Caco-2 (cell line): ENCODE measurements at regions of chr5 and their contacts with region 1.

Region 1: GRCh38 chr5:36414869-36415282 is 113.2 kb upstream of the RANBP3L start:
- DNase-seq: peak in 1 of 2 experiments; percentile 51
- H3K4me3 ChIP-seq: no peak overlapping the region
- H3K4me3 Mint-ChIP-seq: no peak overlapping the region
- H3K27ac Mint-ChIP-seq: no peak overlapping the region
- H3K4me1 ChIP-seq: peaks cover 48% of the 10 kb centered on the region
- H3K4me1 Mint-ChIP-seq: peaks cover 25% of the 10 kb centered on the region
- H3K27me3 ChIP-seq: no peaks in the 10 kb centered on the region
- H3K27me3 Mint-ChIP-seq: no peaks in the 10 kb centered on the region
- CTCF ChIP-seq: peak; percentile 54 to 64

Region 2: GRCh38 chr5:36150676-36151433 is 264.0 kb before region 1 on chr5:
- CTCF ChIA-PET with region 1: no interaction called
- POLR2A ChIA-PET with region 1: no interaction called
- intact Hi-C with region 1: no loop called
- DNase-seq: peak; percentile 64 to 68
- H3K4me3 ChIP-seq: peak overlapping the region; percentile 98
- H3K4me3 Mint-ChIP-seq: peak overlapping the region; percentile 75
- H3K27ac Mint-ChIP-seq: peak overlapping the region; percentile 85
- H3K4me1 ChIP-seq: peaks cover 53% of the 10 kb centered on the region
- H3K4me1 Mint-ChIP-seq: peaks cover 46% of the 10 kb centered on the region
- H3K27me3 ChIP-seq: no peaks in the 10 kb centered on the region
- H3K27me3 Mint-ChIP-seq: no peaks in the 10 kb centered on the region
- CTCF ChIP-seq: no peak

Region 3: GRCh38 chr5:36442796-36443195 is 27.9 kb after region 1 on chr5:
- CTCF ChIA-PET with region 1: interaction called, 3 read pairs
- POLR2A ChIA-PET with region 1: no interaction called
- intact Hi-C with region 1: loop called (anchors 1 kb)
- DNase-seq: no peak
- H3K4me3 ChIP-seq: no peak overlapping the region
- H3K4me3 Mint-ChIP-seq: peak overlapping the region; percentile 10
- H3K27ac Mint-ChIP-seq: peak overlapping the region; percentile 75
- H3K4me1 ChIP-seq: peaks cover 54% of the 10 kb centered on the region
- H3K4me1 Mint-ChIP-seq: peaks cover 36% of the 10 kb centered on the region
- H3K27me3 ChIP-seq: no peaks in the 10 kb centered on the region
- H3K27me3 Mint-ChIP-seq: no peaks in the 10 kb centered on the region
- CTCF ChIP-seq: no peak

Region 4: GRCh38 chr5:36492998-36493655 is 78.3 kb after region 1 on chr5:
- CTCF ChIA-PET with region 1: interaction called, 12 read pairs
- POLR2A ChIA-PET with region 1: no interaction called
- intact Hi-C with region 1: loop called (anchors 1 kb)
- DNase-seq: peak in 1 of 2 experiments; percentile 14
- H3K4me3 ChIP-seq: no peak overlapping the region
- H3K4me3 Mint-ChIP-seq: no peak overlapping the region
- H3K27ac Mint-ChIP-seq: no peak overlapping the region
- H3K4me1 ChIP-seq: peaks cover 9% of the 10 kb centered on the region; the same call in 1 of the 2 replicates
- H3K4me1 Mint-ChIP-seq: peaks cover 10% of the 10 kb centered on the region
- H3K27me3 ChIP-seq: no peaks in the 10 kb centered on the region
- H3K27me3 Mint-ChIP-seq: no peaks in the 10 kb centered on the region
- CTCF ChIP-seq: peak in 1 of 2 experiments; percentile 16

Region 5: GRCh38 chr5:36606428-36607113 is 191.7 kb after region 1 on chr5 and contains the start of gene SLC1A3:
- CTCF ChIA-PET with region 1: interaction called, 3 read pairs
- POLR2A ChIA-PET with region 1: interaction called, 3 read pairs
- intact Hi-C with region 1: loop called (anchors 2 kb)
- DNase-seq: peak; percentile 83 to 87
- H3K4me3 ChIP-seq: peak within 1 kb of the TSS; percentile 40
- H3K4me3 Mint-ChIP-seq: peak within 1 kb of the TSS; percentile 98
- H3K27ac Mint-ChIP-seq: peak within 1 kb of the TSS; percentile 91
- H3K4me1 ChIP-seq: peaks cover 55% of the 10 kb centered on the region
- H3K4me1 Mint-ChIP-seq: peaks cover 27% of the 10 kb centered on the region
- H3K27me3 ChIP-seq: no peaks in the 10 kb centered on the region
- H3K27me3 Mint-ChIP-seq: no peaks in the 10 kb centered on the region
- CTCF ChIP-seq: no peak
- total RNA-seq, gene SLC1A3: 178 and 195 TPM in 2 replicates

Region 6: DNA sequence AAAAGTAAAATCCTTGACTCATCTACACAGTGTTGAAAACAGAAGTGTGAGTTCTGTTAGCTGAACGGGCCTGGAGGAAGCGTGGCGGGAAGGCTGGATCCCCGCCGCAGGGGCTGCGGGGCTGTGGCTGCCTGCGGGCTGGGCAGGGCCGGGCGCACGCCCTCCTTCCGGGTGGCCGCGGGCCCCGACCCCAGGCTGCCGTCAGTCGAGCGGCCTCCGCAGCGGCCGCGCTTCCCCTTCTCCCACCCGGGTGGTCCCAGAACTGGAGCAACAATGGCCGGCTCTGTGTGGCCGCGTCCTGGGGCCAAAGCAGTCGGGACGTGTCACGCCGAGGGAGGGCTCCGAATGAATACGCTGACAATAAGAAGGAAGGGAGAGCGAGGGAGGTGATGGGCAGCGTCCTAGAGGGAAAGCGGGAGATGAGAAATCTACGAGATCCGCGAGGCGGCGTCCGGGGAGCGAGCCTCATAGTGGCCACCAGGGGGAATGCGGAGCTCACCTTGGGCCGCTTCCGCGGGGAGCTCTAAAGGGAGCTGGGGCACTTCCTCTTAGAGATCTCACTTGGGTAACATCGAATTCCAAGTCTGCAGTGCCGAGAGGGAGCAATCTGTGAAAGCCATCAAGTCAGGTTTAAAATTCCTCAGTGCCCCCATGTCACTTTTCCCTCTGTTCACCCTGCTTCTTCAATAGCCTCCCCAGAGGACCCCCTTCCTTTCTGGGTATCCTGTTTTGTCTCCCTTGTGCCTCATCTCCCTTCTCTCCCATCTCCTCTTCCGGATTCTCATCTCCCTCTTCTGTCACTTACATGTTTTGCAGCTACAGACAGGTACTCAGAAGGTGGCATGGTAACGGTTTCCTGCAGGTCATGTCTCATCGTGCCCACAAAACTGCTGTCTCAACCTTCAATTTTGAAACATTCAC is 275.4 kb after region 1 on chr5:
- CTCF ChIA-PET with region 1: interaction called, 44 read pairs
- POLR2A ChIA-PET with region 1: interaction called, 4 read pairs
- intact Hi-C with region 1: loop called (anchors 1 kb)
- DNase-seq: peak; percentile 90 to 91
- H3K4me3 ChIP-seq: peak overlapping the region; percentile 71
- H3K4me3 Mint-ChIP-seq: peak overlapping the region; percentile 75
- H3K27ac Mint-ChIP-seq: peak overlapping the region; percentile 28
- H3K4me1 ChIP-seq: peaks cover 14% of the 10 kb centered on the region; the same call in 1 of the 2 replicates
- H3K4me1 Mint-ChIP-seq: peaks cover 10% of the 10 kb centered on the region
- H3K27me3 ChIP-seq: no peaks in the 10 kb centered on the region
- H3K27me3 Mint-ChIP-seq: no peaks in the 10 kb centered on the region
- CTCF ChIP-seq: peak; percentile 80 to 91

Region 7: DNA sequence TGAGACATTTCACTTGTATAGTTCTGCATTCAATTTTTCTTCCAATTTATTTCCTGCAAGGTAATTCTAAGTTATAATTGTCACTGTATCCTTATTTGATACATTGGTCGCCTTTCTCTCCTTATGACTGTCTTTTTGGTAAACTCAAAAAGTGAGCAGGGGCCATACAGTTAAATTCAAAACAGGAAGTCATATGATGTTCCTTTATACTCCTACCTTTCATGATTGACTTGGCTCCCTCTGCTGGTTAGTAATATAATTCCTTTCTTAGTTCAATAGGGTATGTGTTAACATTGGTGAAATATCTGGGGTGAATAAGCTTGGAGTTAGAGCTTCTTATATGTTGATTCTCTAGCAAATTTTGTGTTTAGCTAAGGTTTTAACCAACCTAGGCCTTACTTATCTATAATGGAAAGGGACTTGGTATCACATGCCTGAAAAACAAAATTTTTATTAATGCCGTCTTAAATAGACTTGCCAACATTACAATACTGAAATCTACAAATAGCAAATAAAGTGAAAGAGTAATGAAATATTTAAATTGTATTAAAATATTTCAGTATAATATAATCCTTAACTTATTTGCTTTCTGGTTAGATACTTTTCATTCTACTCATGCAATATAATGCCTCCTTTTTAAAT is 455.6 kb after region 1 on chr5:
- CTCF ChIA-PET with region 1: interaction called, 6 read pairs
- POLR2A ChIA-PET with region 1: no interaction called
- intact Hi-C with region 1: loop called (anchors 5 kb)
- DNase-seq: peak in 1 of 2 experiments; percentile 61
- H3K4me3 ChIP-seq: no peak overlapping the region
- H3K4me3 Mint-ChIP-seq: no peak overlapping the region
- H3K27ac Mint-ChIP-seq: no peak overlapping the region
- H3K4me1 ChIP-seq: 0 out of 2 replicates have a peak, but pooled peaks cover 10% of the 10 kb centered on the region
- H3K4me1 Mint-ChIP-seq: peaks cover 13% of the 10 kb centered on the region
- H3K27me3 ChIP-seq: no peaks in the 10 kb centered on the region
- H3K27me3 Mint-ChIP-seq: no peaks in the 10 kb centered on the region
- CTCF ChIP-seq: peak; percentile 41 to 59